ENCODE measurements at regions of chr5 and their contacts with region 1.

Region 1: DNA sequence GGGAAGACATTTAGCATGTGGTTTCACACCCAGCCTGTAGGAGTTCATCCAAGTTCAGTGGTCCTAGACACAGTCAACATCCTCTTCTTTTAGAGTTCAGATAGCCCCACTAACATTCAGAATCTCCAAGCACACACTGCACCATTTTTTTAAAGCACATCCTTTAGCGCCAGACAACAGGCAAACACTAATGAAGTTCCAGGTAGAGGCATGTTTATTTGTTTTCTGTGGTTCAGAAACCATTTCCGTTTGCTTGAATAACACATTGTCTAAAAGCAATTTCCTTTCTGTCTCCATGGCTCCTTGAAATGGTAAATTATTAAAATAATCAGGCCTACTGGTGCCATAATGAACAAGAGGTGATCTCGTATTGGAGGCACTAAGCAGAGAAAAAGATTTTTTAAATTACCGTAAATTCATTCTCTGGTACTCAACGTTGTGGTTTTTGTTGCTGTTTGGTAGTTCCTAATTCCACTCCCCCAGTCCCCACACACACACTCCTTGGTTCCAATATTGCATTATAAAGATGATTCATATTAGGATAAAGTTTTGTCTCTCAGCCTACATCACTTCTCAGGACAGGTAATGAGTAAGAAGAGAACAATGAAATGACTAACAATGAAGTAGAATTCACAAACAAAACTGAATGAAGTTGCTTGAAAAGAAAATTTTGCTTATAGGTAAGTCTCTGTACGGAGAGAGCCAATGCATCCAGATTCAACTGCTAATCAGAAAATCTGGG is 153.1 kb downstream of the PCSK1 start:
- DNase-seq: peak; percentile 37
- H3K4me3 Mint-ChIP-seq: no peak overlapping the region
- H3K27ac Mint-ChIP-seq: peak overlapping the region; percentile 31
- H3K4me1 Mint-ChIP-seq: peaks cover 13% of the 10 kb centered on the region
- H3K27me3 Mint-ChIP-seq: peaks cover 26% of the 10 kb centered on the region

Region 2: DNA sequence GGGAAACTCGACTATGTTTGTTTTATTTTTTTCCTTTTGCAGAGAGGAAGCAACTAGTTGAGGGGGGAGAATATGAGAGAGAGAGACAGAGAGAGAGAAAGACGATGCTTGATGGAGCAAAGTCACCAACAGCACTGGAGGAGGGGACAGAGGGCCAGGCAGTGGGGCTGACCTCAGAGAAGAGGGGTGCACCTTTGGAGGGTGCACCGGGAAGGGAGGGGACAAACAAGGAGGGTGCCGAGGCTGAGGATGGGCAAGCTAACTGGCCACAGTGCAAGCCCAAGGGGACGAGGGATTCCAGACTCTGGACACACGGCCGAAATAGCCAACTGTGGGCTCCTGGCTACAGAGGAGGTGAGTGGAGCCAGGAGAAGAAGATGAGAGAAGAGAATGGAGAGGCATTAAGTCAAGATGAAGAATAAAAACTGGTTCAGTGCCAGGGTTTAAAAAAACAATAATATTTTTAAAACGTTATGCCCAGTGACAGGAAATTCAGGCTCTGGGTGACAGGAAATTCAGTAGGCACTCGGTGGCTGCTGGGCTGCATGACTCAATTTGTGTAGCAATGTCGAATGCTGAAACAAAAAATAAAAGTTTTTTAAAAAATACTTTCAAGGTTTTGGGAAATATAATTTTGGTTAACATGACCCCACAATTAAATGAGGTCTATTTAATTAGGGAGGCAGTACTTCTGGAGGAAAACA is 444.1 kb before region 1 on chr5:
- CTCF ChIA-PET with region 1: no interaction called
- intact Hi-C with region 1: loop called (anchors 1 kb)
- DNase-seq: peak; percentile 57
- H3K4me3 Mint-ChIP-seq: peak overlapping the region; percentile 77
- H3K27ac Mint-ChIP-seq: peak overlapping the region; percentile 92
- H3K4me1 Mint-ChIP-seq: peaks cover 47% of the 10 kb centered on the region
- H3K27me3 Mint-ChIP-seq: no peaks in the 10 kb centered on the region

Region 3: GRCh38 chr5:96113170-96113939 is 166.6 kb before region 1 on chr5:
- CTCF ChIA-PET with region 1: interaction called, 3 read pairs
- intact Hi-C with region 1: loop called (anchors 1 kb)
- DNase-seq: peak; percentile 19
- H3K4me3 Mint-ChIP-seq: no peak overlapping the region
- H3K27ac Mint-ChIP-seq: peak overlapping the region; percentile 77
- H3K4me1 Mint-ChIP-seq: peaks cover 28% of the 10 kb centered on the region
- H3K27me3 Mint-ChIP-seq: peaks cover 4% of the 10 kb centered on the region

Region 4: DNA sequence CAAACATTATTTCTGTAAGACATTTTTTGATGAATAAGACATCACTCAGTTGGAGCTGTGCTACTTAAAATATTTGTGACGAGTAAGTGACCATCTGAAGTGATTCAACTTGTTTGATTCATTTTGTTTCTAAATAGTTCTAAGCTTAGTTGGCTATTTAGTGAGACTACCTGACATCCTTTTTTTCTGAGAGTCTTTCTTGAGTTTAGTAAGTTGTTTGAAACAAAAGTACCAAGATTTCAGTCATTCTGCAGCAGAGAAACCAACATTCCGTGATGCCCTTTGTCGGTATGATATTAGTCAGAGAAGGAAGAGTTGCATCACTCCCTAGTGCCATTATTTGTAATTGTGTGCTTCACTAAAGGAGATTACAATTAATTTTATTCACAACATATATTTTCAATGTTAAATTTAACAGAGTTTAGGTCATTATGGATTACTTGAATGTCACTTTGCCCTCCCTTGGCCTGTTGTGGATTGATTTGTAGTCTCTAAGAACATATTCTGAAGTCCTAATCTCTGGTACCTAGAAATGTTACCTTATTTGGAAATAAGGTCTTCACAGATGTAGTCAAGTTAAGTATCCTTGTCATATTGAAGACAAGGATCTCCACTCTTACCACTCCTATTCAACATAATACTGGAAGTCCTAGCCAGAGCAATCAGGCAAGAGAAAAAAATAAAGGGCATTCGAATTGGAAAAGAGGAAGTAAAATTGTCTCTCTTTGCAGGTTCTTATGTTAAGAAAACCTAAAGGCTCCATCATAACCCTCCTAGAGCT is 59.2 kb before region 1 on chr5:
- CTCF ChIA-PET with region 1: no interaction called
- intact Hi-C with region 1: loop called (anchors 1 kb)
- DNase-seq: peak; percentile 22
- H3K4me3 Mint-ChIP-seq: no peak overlapping the region
- H3K27ac Mint-ChIP-seq: no peak overlapping the region
- H3K4me1 Mint-ChIP-seq: peaks cover 11% of the 10 kb centered on the region
- H3K27me3 Mint-ChIP-seq: peaks cover 16% of the 10 kb centered on the region